ENCODE measurements at regions of chr19 and their contacts with region 1.

Region 1: GRCh38 chr19:6516659-6517291 is 14.1 kb upstream of the TNFSF9 start:
- DNase-seq: peak; percentile 80 to 89 (median 85)
- H3K4me3 ChIP-seq: peak overlapping the region; percentile 30 to 70
- H3K4me3 Mint-ChIP-seq: peak overlapping the region; percentile 93 to 98 (median 96)
- H3K27ac ChIP-seq: peak overlapping the region; percentile 45
- H3K27ac Mint-ChIP-seq: peak overlapping the region; percentile 42 to 96 (median 84)
- H3K4me1 ChIP-seq: peaks cover 27% of the 10 kb centered on the region
- H3K4me1 Mint-ChIP-seq: peaks cover 21 to 38% (median 27%) of the 10 kb centered on the region in 4 donors
- H3K27me3 ChIP-seq: no peaks in the 10 kb centered on the region
- H3K27me3 Mint-ChIP-seq: no peaks in the 10 kb centered on the region

Region 2: DNA sequence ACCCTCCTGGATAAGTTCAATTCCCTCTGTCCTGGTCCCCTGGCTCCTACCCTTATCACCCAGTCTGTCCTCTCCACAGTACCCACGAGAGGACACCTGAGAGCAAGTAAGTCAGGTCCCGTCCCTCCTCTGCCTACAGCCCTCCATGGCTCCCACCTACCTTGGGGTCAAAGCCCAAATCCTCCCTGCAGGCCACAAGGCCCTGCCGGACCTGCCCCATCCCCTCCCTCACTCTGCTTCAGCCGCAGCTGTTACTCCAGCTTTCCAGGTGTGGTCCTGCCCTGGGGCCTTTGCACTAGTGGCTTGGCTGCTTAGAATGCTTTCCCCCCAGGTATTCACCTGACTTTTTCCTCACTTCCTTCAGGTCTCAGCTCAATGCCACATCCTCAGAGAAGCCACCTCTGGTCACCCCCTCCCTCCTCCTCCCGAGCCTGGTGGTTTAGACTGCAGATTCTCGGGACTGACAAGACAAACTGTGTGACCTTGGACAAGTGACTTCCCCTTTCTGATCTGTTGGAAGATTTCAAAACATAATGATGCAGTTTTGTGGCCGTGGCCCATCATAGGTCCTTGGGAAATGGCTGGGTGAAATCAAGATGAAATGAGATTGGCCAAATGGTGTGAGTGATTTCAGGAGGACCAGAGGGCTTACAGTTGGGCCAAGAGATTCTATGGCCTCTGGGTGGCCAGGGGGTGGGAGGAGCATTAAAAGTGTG is 18.3 kb before region 1 on chr19:
- CTCF ChIA-PET with region 1: no interaction called
- POLR2A ChIA-PET with region 1: no interaction called
- intact Hi-C with region 1: no loop called
- DNase-seq: no peak
- H3K4me3 ChIP-seq: no peak overlapping the region
- H3K4me3 Mint-ChIP-seq: peak overlapping the region in 1 of 8 donors; percentile 45
- H3K27ac ChIP-seq: no peak overlapping the region
- H3K27ac Mint-ChIP-seq: no peak overlapping the region
- H3K4me1 ChIP-seq: peaks cover 12% of the 10 kb centered on the region
- H3K4me1 Mint-ChIP-seq: peaks cover 8 to 13% (median 9%) of the 10 kb centered on the region in 4 donors
- H3K27me3 ChIP-seq: peaks cover 7% of the 10 kb centered on the region
- H3K27me3 Mint-ChIP-seq: peaks cover 2 to 8% of the 10 kb centered on the region in 2 donors

Region 3: DNA sequence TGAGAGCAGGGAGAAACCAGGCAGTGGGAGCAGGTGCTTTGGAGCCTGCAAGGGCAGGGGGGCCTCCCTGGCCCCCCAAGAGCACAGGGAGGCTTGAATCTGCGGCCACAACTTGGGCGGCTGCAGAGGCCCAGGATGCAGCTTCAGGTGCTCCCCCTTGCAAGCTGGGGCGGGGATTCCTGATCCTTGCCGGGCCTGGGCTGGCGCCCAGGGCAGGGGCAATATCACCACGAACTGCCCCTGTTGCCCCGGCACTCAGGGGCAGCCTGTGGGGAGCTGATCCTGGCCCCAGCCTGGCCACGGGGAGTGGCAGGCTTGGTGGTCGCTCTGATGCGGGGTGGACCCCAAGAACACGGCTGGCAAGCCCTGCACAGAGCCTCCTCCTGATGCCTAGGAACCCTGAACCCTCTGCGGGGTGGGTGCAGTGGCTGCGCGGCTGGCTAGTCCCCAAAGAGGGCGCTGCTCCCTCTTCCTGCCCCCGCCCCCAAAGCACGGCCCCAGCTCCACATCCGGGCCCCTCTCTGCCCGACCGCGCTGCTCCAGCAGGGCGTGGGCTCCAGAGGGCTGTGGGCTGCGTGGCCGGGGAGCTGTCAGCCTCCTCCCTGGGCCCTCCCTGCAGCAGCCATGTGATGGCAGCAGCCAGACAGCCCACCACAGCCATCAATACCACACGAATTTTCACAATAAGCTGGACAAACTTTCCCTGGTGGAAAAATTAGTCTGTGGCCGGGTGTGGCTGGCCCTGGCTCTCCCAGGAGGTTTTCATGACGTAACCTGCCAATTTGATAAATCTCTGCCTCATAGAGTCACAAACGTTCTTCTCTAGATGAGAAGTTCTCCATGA is 35.1 kb after region 1 on chr19:
- CTCF ChIA-PET with region 1: interaction called, 12 read pairs
- POLR2A ChIA-PET with region 1: interaction called, 3 read pairs
- intact Hi-C with region 1: no loop called
- DNase-seq: peak; percentile 50 to 61 (median 59)
- H3K4me3 ChIP-seq: peak overlapping the region in 1 of 2 donors; percentile 14
- H3K4me3 Mint-ChIP-seq: peak overlapping the region in 5 of 8 donors; percentile 6 to 52 (median 33)
- H3K27ac ChIP-seq: no peak overlapping the region
- H3K27ac Mint-ChIP-seq: no peak overlapping the region
- H3K4me1 ChIP-seq: peaks cover 23% of the 10 kb centered on the region
- H3K4me1 Mint-ChIP-seq: peaks cover 4 to 13% (median 5%) of the 10 kb centered on the region in 4 donors
- H3K27me3 ChIP-seq: no peaks in the 10 kb centered on the region
- H3K27me3 Mint-ChIP-seq: peaks cover 0 to under 1% of the 10 kb centered on the region in 2 donors

Region 4: GRCh38 chr19:6632002-6632621 is 115.3 kb after region 1 on chr19:
- CTCF ChIA-PET with region 1: interaction called, 20 read pairs
- POLR2A ChIA-PET with region 1: no interaction called
- intact Hi-C with region 1: loop called (anchors 1 kb)
- DNase-seq: peak; percentile 78 to 86 (median 82)
- H3K4me3 ChIP-seq: no peak overlapping the region
- H3K4me3 Mint-ChIP-seq: no peak overlapping the region
- H3K27ac ChIP-seq: no peak overlapping the region
- H3K27ac Mint-ChIP-seq: peak overlapping the region in 3 of 7 donors; percentile 3 to 24 (median 22)
- H3K4me1 ChIP-seq: peaks cover 7% of the 10 kb centered on the region
- H3K4me1 Mint-ChIP-seq: peaks cover 8 to 15% (median 10%) of the 10 kb centered on the region in 4 donors
- H3K27me3 ChIP-seq: no peaks in the 10 kb centered on the region
- H3K27me3 Mint-ChIP-seq: peaks cover 1 to 2% of the 10 kb centered on the region in 2 donors

Region 5: GRCh38 chr19:6644796-6645195 is 128.0 kb after region 1 on chr19:
- CTCF ChIA-PET with region 1: no interaction called
- POLR2A ChIA-PET with region 1: no interaction called
- intact Hi-C with region 1: no loop called
- DNase-seq: no peak
- H3K4me3 ChIP-seq: no peak overlapping the region
- H3K4me3 Mint-ChIP-seq: no peak overlapping the region
- H3K27ac ChIP-seq: no peak overlapping the region
- H3K27ac Mint-ChIP-seq: peak overlapping the region in 1 of 7 donors; percentile 66
- H3K4me1 ChIP-seq: peaks cover 27% of the 10 kb centered on the region
- H3K4me1 Mint-ChIP-seq: peaks cover 19 to 36% (median 25%) of the 10 kb centered on the region in 4 donors
- H3K27me3 ChIP-seq: no peaks in the 10 kb centered on the region
- H3K27me3 Mint-ChIP-seq: no peaks in the 10 kb centered on the region

Region 6: GRCh38 chr19:6753178-6754031 is 236.6 kb after region 1 on chr19:
- CTCF ChIA-PET with region 1: no interaction called
- POLR2A ChIA-PET with region 1: no interaction called
- intact Hi-C with region 1: loop called (anchors 1 kb)
- DNase-seq: peak; percentile 71 to 77 (median 72)
- H3K4me3 ChIP-seq: peak overlapping the region in 1 of 2 donors; percentile 49
- H3K4me3 Mint-ChIP-seq: peak overlapping the region; percentile 57 to 78 (median 70)
- H3K27ac ChIP-seq: peak overlapping the region; percentile 38
- H3K27ac Mint-ChIP-seq: peak overlapping the region; percentile 77 to 93 (median 86)
- H3K4me1 ChIP-seq: no peaks in the 10 kb centered on the region
- H3K4me1 Mint-ChIP-seq: peaks cover 5 to 12% (median 8%) of the 10 kb centered on the region in 4 donors
- H3K27me3 ChIP-seq: no peaks in the 10 kb centered on the region
- H3K27me3 Mint-ChIP-seq: no peaks in the 10 kb centered on the region

Measured in CD4-positive, alpha-beta memory T cell (primary cell).